GM12878 (cell line): ENCODE measurements at regions of chr3 and their contacts with region 1.

Region 1: DNA sequence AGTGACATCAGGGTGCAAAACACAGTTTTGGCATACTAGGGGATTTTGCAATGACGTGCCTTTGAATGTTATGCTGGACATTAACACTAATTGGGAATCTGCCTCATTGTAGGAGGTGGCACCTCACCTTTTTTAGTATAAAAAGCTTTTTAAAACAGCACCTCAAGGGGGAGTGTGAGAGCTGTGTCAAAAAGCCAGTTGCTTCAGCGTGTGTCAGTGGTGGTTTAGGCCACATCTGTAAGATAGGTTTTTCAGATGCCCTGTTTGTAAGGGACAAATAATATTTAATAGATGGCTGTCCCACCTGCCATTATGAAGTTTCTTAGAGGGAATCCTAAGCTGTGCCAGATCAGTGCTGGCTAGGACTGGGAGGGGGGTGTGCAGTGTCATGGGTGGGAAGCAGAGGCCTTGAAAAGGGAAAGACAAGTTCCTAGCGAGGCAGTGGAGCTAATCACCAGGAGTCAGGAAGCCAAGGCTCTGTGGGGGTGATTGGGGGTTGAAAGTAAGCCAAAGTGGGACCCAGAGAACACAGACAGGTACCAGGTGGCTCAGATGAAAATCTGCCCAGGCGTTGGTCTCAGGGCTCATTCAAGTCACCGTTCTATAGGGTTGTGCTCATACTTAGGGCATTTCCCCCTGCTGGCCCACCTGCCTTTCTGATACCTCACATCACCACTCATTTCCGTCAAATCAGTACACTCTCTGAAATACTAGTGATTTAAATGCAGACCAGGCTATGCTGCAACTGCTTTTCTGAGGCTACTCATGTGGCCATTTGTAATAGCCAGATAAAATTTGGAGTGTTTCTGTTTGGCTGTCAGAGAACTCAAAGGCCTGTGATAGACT is 120.5 kb downstream of the BBX start:
- DNase-seq: no peak
- ATAC-seq: peak; percentile 87
- H3K4me3 ChIP-seq: no peak overlapping the region
- H3K27ac ChIP-seq: no peak overlapping the region
- H3K4me1 ChIP-seq: peaks cover 14% of the 10 kb centered on the region
- H3K27me3 ChIP-seq: no peaks in the 10 kb centered on the region
- CTCF ChIP-seq: peak; percentile 34 to 53 (median 48); a peak in 5 of 6 replicates
- EP300 ChIP-seq: no peak
- POLR2A ChIP-seq: no peak
- RAD21 ChIP-seq: peak; percentile 58

Region 2: GRCh38 chr3:107297597-107297996 is 345.7 kb before region 1 on chr3:
- CTCF ChIA-PET with region 1: no interaction called
- POLR2A ChIA-PET with region 1: no interaction called
- RAD21 ChIA-PET with region 1: no interaction called
- SMC1A ChIA-PET with region 1: no interaction called
- in situ Hi-C with region 1: no loop called
- intact Hi-C with region 1: no loop called
- DNase-seq: no peak
- ATAC-seq: no peak
- H3K4me3 ChIP-seq: no peak overlapping the region
- H3K27ac ChIP-seq: no peak overlapping the region
- H3K4me1 ChIP-seq: no peaks in the 10 kb centered on the region
- H3K27me3 ChIP-seq: no peaks in the 10 kb centered on the region
- CTCF ChIP-seq: no peak
- EP300 ChIP-seq: no peak
- POLR2A ChIP-seq: no peak
- RAD21 ChIP-seq: no peak

Region 3: DNA sequence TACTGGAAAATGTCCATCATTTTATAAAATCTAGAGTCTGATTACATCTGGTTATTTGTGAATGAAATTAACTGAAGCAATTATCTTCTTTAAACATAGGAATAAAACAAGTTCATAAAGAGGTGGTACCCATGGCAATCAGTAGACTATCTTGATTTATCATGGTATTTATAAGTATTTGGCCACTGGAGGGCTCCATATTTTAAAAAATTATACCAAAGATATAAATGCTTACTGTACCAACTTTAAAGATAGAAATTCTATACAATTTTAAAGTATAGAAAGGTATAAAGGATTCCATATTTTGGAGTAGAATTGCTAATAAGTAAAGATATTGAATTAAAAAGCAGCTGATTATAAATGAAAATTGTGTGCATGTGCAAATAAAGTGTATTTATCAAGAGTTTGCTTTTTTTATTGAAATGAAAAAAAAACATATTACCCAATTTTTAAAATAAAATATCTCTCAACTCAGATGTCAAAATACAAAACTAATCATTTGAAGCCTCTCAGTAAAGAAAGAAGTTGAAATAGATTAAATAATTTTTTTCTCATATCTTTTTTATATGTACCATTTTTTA is 15.2 kb before region 1 on chr3:
- CTCF ChIA-PET with region 1: interaction called, 36 read pairs
- POLR2A ChIA-PET with region 1: interaction called, 5 read pairs
- RAD21 ChIA-PET with region 1: interaction called, 28 read pairs
- SMC1A ChIA-PET with region 1: interaction called, 36 read pairs
- in situ Hi-C with region 1: no loop called
- intact Hi-C with region 1: no loop called
- DNase-seq: no peak
- ATAC-seq: peak; percentile 46; the same call in 1 of the 3 replicates
- H3K4me3 ChIP-seq: no peak overlapping the region
- H3K27ac ChIP-seq: no peak overlapping the region
- H3K4me1 ChIP-seq: peaks cover 10% of the 10 kb centered on the region
- H3K27me3 ChIP-seq: no peaks in the 10 kb centered on the region
- CTCF ChIP-seq: peak in 1 of 3 experiments; percentile 16; a peak in 2 of 6 replicates
- EP300 ChIP-seq: no peak
- POLR2A ChIP-seq: no peak
- RAD21 ChIP-seq: no peak

Region 4: GRCh38 chr3:107794664-107795443 is 151.6 kb after region 1 on chr3:
- CTCF ChIA-PET with region 1: no interaction called
- POLR2A ChIA-PET with region 1: no interaction called
- RAD21 ChIA-PET with region 1: no interaction called
- SMC1A ChIA-PET with region 1: no interaction called
- in situ Hi-C with region 1: no loop called
- intact Hi-C with region 1: no loop called
- DNase-seq: no peak
- ATAC-seq: no peak
- H3K4me3 ChIP-seq: no peak overlapping the region
- H3K27ac ChIP-seq: no peak overlapping the region
- H3K4me1 ChIP-seq: no peaks in the 10 kb centered on the region
- H3K27me3 ChIP-seq: no peaks in the 10 kb centered on the region
- CTCF ChIP-seq: 0 out of 6 replicates have a peak, but pooled peaks of 1 of the 3 experiments have one; percentile 6
- EP300 ChIP-seq: no peak
- POLR2A ChIP-seq: no peak
- RAD21 ChIP-seq: no peak

Region 5: GRCh38 chr3:107846279-107846852 is 203.1 kb after region 1 on chr3:
- CTCF ChIA-PET with region 1: interaction called, 10 read pairs
- POLR2A ChIA-PET with region 1: no interaction called
- RAD21 ChIA-PET with region 1: no interaction called
- SMC1A ChIA-PET with region 1: interaction called, 4 read pairs
- in situ Hi-C with region 1: no loop called
- intact Hi-C with region 1: no loop called
- DNase-seq: no peak
- ATAC-seq: peak; percentile 64
- H3K4me3 ChIP-seq: no peak overlapping the region
- H3K27ac ChIP-seq: no peak overlapping the region
- H3K4me1 ChIP-seq: no peaks in the 10 kb centered on the region; the same call in 1 of the 2 replicates
- H3K27me3 ChIP-seq: no peaks in the 10 kb centered on the region; a peak in 1 of 4 replicates
- CTCF ChIP-seq: peak; percentile 56 to 61 (median 58)
- EP300 ChIP-seq: no peak
- POLR2A ChIP-seq: no peak
- RAD21 ChIP-seq: peak; percentile 54